ENCODE measurements at regions of chr22 and their contacts with region 1.

Region 1: DNA sequence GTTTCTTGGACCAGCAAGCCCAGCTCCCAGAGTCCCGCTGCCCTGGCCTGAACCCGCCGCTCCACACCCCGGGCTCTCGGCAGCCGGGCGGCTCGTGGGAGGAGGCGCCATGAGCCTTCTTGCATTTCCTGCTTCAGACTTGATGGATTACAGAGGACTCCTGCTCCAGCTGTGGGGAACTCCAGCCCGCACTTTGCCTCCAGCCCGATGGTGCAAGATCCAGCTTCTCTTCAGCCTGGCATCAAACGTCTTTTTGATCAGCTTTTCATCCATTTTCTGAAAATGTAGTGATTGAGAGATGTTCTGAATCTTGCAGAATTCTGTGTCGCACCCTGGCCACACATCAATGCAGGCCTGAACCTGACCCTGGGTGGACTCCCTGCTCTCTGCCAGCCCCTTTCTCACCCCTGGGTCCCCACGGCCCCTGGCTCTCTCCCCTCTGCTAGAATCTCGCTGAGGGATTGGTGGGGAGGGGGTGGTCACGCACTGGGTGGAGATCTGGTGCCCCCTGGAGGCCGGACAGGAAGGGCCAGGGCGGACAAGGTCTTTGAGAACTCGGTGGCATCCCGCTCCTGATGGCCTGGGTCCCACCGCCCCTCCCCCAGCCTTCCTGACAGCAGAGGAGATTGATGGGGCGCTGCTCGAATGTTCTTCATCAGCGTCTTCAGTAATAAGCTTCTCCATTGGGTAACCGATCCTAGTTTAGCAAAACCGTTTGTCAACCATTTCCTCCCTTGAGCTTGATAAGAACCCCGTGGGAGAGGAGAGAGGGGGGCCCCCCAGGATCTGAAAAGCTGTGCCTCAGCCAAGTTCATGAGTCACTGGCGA is 12.1 kb upstream of the NFAM1 start:
- DNase-seq: peak; percentile 73

Region 2: GRCh38 chr22:42169055-42169469 is 275.2 kb before region 1 on chr22:
- in situ Hi-C with region 1: loop called (anchors 10 kb)
- DNase-seq: peak; percentile 79